Cardiac septum (tissue), 1 donor: ENCODE measurements at regions of chr18 and their contacts with region 1.

Region 1: GRCh38 chr18:62584241-62585120 is 61.7 kb downstream of the ZCCHC2 start:
- DNase-seq: peak; percentile 90

Region 2: DNA sequence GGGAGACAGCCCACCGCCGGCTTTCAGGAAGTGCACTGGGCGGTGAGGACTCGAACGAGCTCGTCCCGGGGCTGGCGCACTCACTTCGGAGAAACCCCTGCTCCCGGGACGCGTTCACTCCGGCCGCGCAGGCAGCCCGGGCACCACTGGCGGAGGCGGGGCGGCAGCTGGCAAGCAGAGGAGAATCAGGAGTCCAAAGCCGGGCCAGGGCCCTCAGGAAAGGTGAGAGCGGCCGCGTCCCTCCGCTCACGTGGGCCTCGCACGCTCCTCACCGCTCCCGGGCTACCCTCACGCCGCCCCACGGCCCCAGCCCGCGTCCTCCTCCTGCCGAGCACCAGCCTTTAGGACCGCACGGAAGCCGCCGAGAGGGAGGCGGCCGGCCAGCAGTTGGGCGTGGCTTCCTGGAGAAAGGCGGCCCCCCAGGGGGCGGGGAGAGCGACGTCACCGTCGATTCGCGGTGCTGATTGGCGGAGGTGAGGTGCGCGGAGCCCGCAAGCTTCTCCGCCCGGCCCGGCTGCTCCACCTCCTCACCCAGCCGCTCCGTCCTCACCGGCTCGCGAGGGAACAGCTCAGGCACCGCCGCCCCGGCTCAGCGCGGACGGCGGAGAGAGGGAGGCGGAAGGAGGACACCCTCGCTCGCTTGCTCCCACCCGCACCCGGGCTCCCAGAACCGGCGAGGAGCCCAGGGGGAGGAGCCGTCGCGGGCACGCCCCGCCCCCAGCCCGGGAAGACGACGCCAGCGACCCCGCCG is 61.8 kb before region 1 on chr18 and contains the start of gene ZCCHC2:
- intact Hi-C with region 1: no loop called
- DNase-seq: peak; percentile 99
- total RNA-seq, gene ZCCHC2: 19.1 TPM

Region 3: DNA sequence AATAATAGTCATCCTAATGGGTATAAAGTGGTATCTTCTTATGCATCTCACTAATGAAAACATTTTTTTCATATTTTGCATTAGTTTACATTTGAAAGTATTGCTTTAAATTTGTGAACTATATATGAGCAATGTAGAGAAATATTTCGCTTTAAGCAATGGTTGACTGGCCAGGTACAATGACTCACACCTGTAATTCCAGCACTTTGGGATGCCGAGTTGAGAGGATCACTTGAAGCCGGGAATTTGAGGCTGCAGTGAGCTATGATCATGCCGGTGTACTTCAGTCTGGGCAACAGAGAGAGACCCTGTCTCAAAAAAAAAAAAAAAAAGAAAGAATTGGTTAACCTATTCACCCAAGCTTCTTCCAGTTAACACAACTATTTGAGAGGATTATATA is 46.5 kb before region 1 on chr18:
- intact Hi-C with region 1: no loop called
- DNase-seq: no peak

Region 4: DNA sequence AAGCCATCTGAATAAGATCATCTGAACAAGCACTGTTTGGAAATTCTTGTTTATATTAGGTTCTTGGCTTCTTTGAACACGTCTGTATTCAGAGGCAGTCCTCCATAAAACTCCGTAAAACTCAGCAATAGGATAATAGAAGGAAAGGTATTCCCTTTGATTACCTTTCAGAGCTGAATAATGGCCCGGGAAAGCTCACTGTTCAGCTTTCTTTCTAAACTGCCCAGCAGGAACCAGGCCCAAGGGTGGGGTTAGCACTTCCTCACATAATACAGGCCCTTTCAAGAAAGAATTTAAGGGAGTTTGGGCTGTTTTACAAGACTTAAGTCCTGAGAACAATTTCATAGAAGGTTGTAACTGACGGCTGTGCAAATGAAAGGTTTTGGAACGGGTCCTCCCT is 58.7 kb after region 1 on chr18:
- intact Hi-C with region 1: no loop called
- DNase-seq: no peak

Region 5: GRCh38 chr18:62982600-62983251 is 398.2 kb after region 1 on chr18:
- intact Hi-C with region 1: loop called (anchors 2 kb)
- DNase-seq: no peak